Heart left ventricle (tissue), 16 donors: ENCODE measurements at regions of chr13 and their contacts with region 1.

Region 1: GRCh38 chr13:25836574-25837336 is 215.1 kb downstream of the SHISA2 start:
- DNase-seq: no peak
- ATAC-seq: no peak
- H3K4me3 ChIP-seq: no peak overlapping the region
- H3K27ac ChIP-seq: no peak overlapping the region
- H3K4me1 ChIP-seq: no peaks in the 10 kb centered on the region
- H3K27me3 ChIP-seq: peaks cover 0 to 12% (median 0%) of the 10 kb centered on the region in 9 donors
- CTCF ChIP-seq: no peak
- POLR2A ChIP-seq: no peak

Region 2: GRCh38 chr13:26062844-26063444 is 226.2 kb after region 1 on chr13:
- intact Hi-C with region 1: loop called in 1 of 10 experiments (anchors 10 kb)
- DNase-seq: peak in 2 of 5 donors; percentile 29 to 44
- ATAC-seq: peak in 3 of 4 donors; percentile 47 to 84 (median 77)
- H3K4me3 ChIP-seq: no peak overlapping the region
- H3K27ac ChIP-seq: no peak overlapping the region
- H3K4me1 ChIP-seq: no peaks in the 10 kb centered on the region
- H3K27me3 ChIP-seq: peaks cover 0 to 8% (median 0%) of the 10 kb centered on the region in 9 donors
- CTCF ChIP-seq: peak; percentile 54 to 79 (median 68)
- POLR2A ChIP-seq: no peak

Region 3: GRCh38 chr13:26300140-26300539 is 463.4 kb after region 1 on chr13:
- intact Hi-C with region 1: no loop called
- DNase-seq: no peak
- ATAC-seq: peak in 1 of 4 donors; percentile 45
- H3K4me3 ChIP-seq: no peak overlapping the region
- H3K27ac ChIP-seq: no peak overlapping the region
- H3K4me1 ChIP-seq: peaks cover 0 to 55% (median 26%) of the 10 kb centered on the region in 12 donors
- H3K27me3 ChIP-seq: no peaks in the 10 kb centered on the region
- CTCF ChIP-seq: no peak
- POLR2A ChIP-seq: no peak